SK-N-SH (cell line): ENCODE measurements at regions of chr4 and their contacts with region 1.

Region 1: GRCh38 chr4:15231265-15232091 is 196.4 kb upstream of the C1QTNF7 start:
- DNase-seq: peak; percentile 77
- H3K4me3 ChIP-seq: no peak overlapping the region; a peak in 1 of 4 replicates
- H3K27ac ChIP-seq: peak overlapping the region in 1 of 2 experiments; percentile 74; a peak in 2 of 4 replicates
- H3K4me1 ChIP-seq: peaks cover 13 to 26% of the 10 kb centered on the region in 2 experiments
- H3K27me3 ChIP-seq: no peaks in the 10 kb centered on the region
- CTCF ChIP-seq: peak; percentile 86
- EP300 ChIP-seq: no peak; a peak in 1 of 4 replicates
- RAD21 ChIP-seq: peak; percentile 93

Region 2: GRCh38 chr4:15469402-15470127 is 238.1 kb after region 1 on chr4 and contains the start of gene CC2D2A:
- CTCF ChIA-PET with region 1: interaction called, 24 read pairs
- POLR2A ChIA-PET with region 1: no interaction called
- DNase-seq: peak; percentile 42
- H3K4me3 ChIP-seq: peak within 1 kb of the TSS; percentile 61 to 82
- H3K27ac ChIP-seq: peak within 1 kb of the TSS; percentile 63 to 76
- H3K4me1 ChIP-seq: peaks cover 0 to 4% of the 10 kb centered on the region in 2 experiments; a peak in 1 of 4 replicates
- H3K27me3 ChIP-seq: no peaks in the 10 kb centered on the region
- CTCF ChIP-seq: no peak
- EP300 ChIP-seq: no peak
- RAD21 ChIP-seq: no peak
- polyA plus RNA-seq, gene CC2D2A: 17.8 and 23.4 TPM in 2 replicates